ENCODE measurements at regions of chr5 and their contacts with region 1.

Region 1: GRCh38 chr5:180860887-180861822 is at the start of gene ZFP62:
- DNase-seq: peak; percentile 95
- ATAC-seq: peak; percentile 99
- total RNA-seq, gene ZFP62: 14.4 to 16.8 TPM

Region 2: GRCh38 chr5:180724944-180725343 is 136.2 kb before region 1 on chr5:
- intact Hi-C with region 1: no loop called
- DNase-seq: no peak
- ATAC-seq: no peak

Region 3: GRCh38 chr5:180816608-180817534 is 44.3 kb before region 1 on chr5:
- intact Hi-C with region 1: loop called in 1 of 2 experiments (anchors 5 kb)
- DNase-seq: no peak
- ATAC-seq: peak; percentile 43 to 65

Measured in left cardiac atrium (tissue), 4 donors.